ENCODE measurements at regions of chr11 and their contacts with region 1.

Region 1: GRCh38 chr11:128172046-128172878 is 415.1 kb downstream of the ETS1 start:
- DNase-seq: peak; percentile 79 to 93 (median 89)
- ATAC-seq: peak; percentile 87 to 88
- H3K4me3 ChIP-seq: no peak overlapping the region
- H3K27ac ChIP-seq: no peak overlapping the region
- H3K4me1 ChIP-seq: no peaks in the 10 kb centered on the region
- H3K27me3 ChIP-seq: no peaks in the 10 kb centered on the region

Region 2: DNA sequence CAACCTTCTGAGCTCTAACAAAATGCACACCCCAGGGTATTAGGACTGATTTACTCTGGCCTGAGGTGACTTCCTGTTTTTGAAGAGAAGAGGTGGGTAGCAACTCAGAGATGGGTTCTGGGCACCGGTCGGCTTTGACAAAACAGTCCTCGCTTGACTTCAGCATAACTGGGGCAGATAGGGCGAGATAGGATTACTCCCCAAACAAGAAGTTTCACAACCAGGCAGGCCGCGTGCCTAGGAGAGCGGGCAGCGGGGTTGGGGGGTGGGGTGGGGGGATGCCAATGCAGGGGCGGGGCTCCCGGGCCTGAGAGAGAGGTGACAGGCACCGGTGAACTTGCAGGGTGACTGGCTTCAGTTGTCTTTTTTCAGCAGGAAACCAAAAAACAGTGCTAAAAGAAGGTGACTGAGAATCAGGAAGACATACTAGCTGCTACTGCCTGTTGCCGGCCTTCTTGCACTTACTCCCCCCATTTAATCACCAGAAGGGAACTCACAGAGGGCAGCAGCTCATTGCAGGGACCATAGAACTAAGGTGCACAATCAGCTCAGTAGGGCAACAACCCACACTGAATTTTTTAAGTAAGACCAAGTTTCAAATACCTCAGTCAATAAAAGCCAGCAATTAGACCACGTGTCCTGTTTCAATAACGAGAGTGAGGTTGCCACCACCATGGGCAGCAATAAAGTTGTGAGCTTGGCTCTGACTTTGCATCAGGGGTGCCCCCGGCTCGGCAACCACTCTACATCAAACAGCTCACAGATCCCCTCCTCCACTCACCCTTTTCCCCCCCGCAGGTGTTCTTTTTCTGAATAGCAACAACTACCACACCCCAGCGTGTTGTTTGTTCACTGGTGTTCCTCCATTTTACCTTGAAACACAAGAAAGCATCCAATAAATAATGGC is 452.3 kb after region 1 on chr11:
- intact Hi-C with region 1: loop called in 2 of 4 experiments (anchors 2 to 5 kb)
- DNase-seq: peak in 1 of 3 donors; percentile 50
- ATAC-seq: no peak
- H3K4me3 ChIP-seq: no peak overlapping the region
- H3K27ac ChIP-seq: no peak overlapping the region
- H3K4me1 ChIP-seq: peaks cover 4% of the 10 kb centered on the region
- H3K27me3 ChIP-seq: no peaks in the 10 kb centered on the region

Region 3: GRCh38 chr11:128630367-128631230 is 458.3 kb after region 1 on chr11:
- intact Hi-C with region 1: loop called in 3 of 4 experiments (anchors 2 to 5 kb)
- DNase-seq: peak; percentile 90 to 93 (median 93)
- ATAC-seq: peak; percentile 76 to 88
- H3K4me3 ChIP-seq: no peak overlapping the region
- H3K27ac ChIP-seq: no peak overlapping the region
- H3K4me1 ChIP-seq: peaks cover 2% of the 10 kb centered on the region
- H3K27me3 ChIP-seq: no peaks in the 10 kb centered on the region

Region 4: GRCh38 chr11:128831174-128832120 is 659.2 kb after region 1 on chr11:
- intact Hi-C with region 1: loop called in 2 of 4 experiments (anchors 5 kb)
- DNase-seq: peak; percentile 76 to 91 (median 90)
- ATAC-seq: peak; percentile 70 to 77
- H3K4me3 ChIP-seq: no peak overlapping the region
- H3K27ac ChIP-seq: no peak overlapping the region
- H3K4me1 ChIP-seq: peaks cover 7% of the 10 kb centered on the region
- H3K27me3 ChIP-seq: no peaks in the 10 kb centered on the region